ENCODE measurements at regions of chrX and their contacts with region 1.

Region 1: GRCh38 chrX:47628980-47629379 is 750 bp downstream of the CFP start:
- DNase-seq: peak in 1 of 3 donors; percentile 54
- H3K4me3 ChIP-seq: peak overlapping the region; percentile 70 to 90 (median 79)
- H3K4me3 Mint-ChIP-seq: peak overlapping the region; percentile 82 to 92
- H3K27ac ChIP-seq: peak overlapping the region; percentile 88 to 96
- H3K27ac Mint-ChIP-seq: peak overlapping the region in 6 of 7 donors; percentile 73 to 95 (median 83)
- H3K4me1 ChIP-seq: peaks cover 87 to 92% of the 10 kb centered on the region in 2 donors
- H3K4me1 Mint-ChIP-seq: peaks cover 64% of the 10 kb centered on the region
- H3K27me3 ChIP-seq: no peaks in the 10 kb centered on the region
- H3K27me3 Mint-ChIP-seq: peaks cover 0 to 3% (median 2%) of the 10 kb centered on the region in 3 donors
- CTCF ChIP-seq: no peak

Region 2: GRCh38 chrX:47587091-47587891 is 41.7 kb before region 1 on chrX:
- intact Hi-C with region 1: loop called (anchors 5 kb)
- DNase-seq: peak in 1 of 3 donors; percentile 64
- H3K4me3 ChIP-seq: no peak overlapping the region
- H3K4me3 Mint-ChIP-seq: no peak overlapping the region
- H3K27ac ChIP-seq: no peak overlapping the region
- H3K27ac Mint-ChIP-seq: peak overlapping the region in 2 of 7 donors; percentile 50 to 78
- H3K4me1 ChIP-seq: peaks cover 12 to 21% of the 10 kb centered on the region in 2 donors
- H3K4me1 Mint-ChIP-seq: peaks cover 20% of the 10 kb centered on the region
- H3K27me3 ChIP-seq: no peaks in the 10 kb centered on the region
- H3K27me3 Mint-ChIP-seq: peaks cover 0 to 3% (median 2%) of the 10 kb centered on the region in 3 donors
- CTCF ChIP-seq: no peak

Region 3: DNA sequence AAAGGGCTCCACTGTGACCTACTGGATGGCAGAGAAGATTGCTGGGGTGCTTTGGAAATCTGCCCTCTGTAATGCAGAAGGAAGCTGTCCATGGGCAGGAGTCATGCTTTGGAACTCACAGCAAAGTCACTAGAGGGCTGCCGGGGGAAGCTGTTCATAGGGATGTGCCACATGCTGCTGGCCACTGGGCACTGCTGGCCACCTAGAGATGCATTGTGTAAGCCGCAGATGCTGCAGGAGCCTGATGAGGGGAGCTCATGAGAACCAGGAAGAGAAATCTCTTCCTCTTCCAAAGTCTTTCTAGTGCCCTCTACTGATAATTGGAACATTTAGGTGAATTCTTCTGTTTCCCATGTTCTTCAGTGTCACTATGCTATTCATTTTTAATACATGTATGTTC is 61.2 kb after region 1 on chrX:
- intact Hi-C with region 1: no loop called
- DNase-seq: peak in 2 of 3 donors; percentile 1 to 5
- H3K4me3 ChIP-seq: no peak overlapping the region
- H3K4me3 Mint-ChIP-seq: no peak overlapping the region
- H3K27ac ChIP-seq: no peak overlapping the region
- H3K27ac Mint-ChIP-seq: no peak overlapping the region
- H3K4me1 ChIP-seq: no peaks in the 10 kb centered on the region
- H3K4me1 Mint-ChIP-seq: peaks cover 2% of the 10 kb centered on the region
- H3K27me3 ChIP-seq: no peaks in the 10 kb centered on the region
- H3K27me3 Mint-ChIP-seq: peaks cover 0 to 7% (median 4%) of the 10 kb centered on the region in 3 donors
- CTCF ChIP-seq: no peak